ENCODE measurements at regions of chr4 and their contacts with region 1.

Region 1: DNA sequence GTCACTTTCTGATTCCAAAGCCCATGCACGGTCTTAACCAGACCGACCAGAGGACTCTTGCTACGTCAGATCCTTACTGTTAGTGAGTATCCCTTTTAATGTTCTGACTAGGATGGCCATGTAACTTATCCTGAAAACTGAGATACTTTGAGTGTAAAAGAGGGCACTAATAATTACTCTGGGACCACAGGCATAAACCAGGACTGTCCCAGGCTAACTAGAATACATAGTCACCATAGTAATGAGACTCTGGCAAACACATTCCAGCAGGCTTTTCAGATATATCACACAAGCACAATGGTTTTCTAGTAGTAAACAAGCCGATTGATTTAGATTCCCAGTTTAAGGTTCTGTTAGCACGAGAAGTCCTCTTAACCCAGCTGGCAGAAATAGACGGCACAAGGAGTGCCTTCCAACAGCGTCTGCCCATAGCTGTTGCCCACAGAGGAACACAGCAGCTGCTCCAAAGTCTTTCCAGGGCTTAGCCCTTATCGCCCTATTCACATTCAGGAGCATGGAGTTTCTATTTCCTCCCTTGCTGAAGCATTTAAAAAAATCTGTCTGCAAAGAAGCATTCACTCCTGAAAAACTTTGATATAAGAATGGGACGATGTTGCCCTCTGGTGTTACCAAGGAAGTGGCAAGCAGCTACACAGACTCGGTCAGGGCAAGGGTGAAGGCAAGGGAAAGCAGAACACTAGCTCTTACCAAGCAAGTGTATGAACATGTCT is 92.4 kb downstream of the CXCL13 start:
- DNase-seq: peak; percentile 34
- ATAC-seq: peak; percentile 61
- H3K4me3 ChIP-seq: no peak overlapping the region
- H3K27ac ChIP-seq: no peak overlapping the region
- H3K4me1 ChIP-seq: peaks cover 53% of the 10 kb centered on the region
- H3K27me3 ChIP-seq: no peaks in the 10 kb centered on the region
- CTCF ChIP-seq: peak; percentile 61
- EP300 ChIP-seq: no peak
- POLR2A ChIP-seq: no peak
- RAD21 ChIP-seq: no peak

Region 2: DNA sequence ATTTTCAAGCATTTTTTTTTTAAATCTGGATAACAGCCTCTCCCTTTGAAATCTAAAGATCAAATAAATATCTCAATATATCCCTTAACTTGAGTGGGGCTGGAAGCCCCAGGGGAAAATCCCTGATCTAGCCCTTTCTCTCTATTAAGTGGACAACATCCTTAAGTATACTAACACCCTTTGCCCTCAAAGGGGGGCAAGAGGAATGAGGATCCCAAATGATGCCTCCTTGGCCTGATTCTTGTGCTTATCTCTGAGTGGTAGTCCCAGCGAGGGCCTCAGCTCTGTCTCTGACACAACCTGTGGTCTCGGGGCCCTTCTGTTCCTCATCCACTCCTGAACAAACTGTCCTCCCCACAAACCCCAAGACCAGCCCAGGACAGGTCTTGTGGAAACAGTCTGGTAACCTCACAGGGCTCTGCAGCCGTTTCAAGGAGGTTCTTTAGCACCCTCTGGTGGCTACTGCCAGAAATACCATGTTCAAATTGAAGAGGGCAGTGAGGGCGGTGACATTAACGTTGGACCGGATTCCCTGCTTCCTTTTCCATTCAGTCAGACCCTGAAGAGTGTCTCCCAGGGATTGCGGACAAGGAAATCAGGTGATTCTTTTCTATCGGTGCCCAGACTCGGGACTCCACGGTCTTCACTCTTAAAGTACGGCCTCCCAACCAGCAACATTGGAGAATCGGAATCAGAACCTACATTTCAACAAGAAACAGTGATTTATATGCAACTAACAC is 79.5 kb before region 1 on chr4:
- CTCF ChIA-PET with region 1: no interaction called
- POLR2A ChIA-PET with region 1: no interaction called
- in situ Hi-C with region 1: loop called (anchors 5 kb)
- intact Hi-C with region 1: loop called (anchors 2 kb)
- DNase-seq: peak; percentile 40
- ATAC-seq: peak; percentile 97
- H3K4me3 ChIP-seq: no peak overlapping the region
- H3K27ac ChIP-seq: no peak overlapping the region
- H3K4me1 ChIP-seq: no peaks in the 10 kb centered on the region
- H3K27me3 ChIP-seq: peaks cover 0 to 3% of the 10 kb centered on the region in 2 experiments; a peak in 1 of 5 replicates
- CTCF ChIP-seq: peak; percentile 86
- EP300 ChIP-seq: no peak
- POLR2A ChIP-seq: no peak
- RAD21 ChIP-seq: 0 out of 2 replicates have a peak, but pooled peaks have one; percentile 27

Region 3: DNA sequence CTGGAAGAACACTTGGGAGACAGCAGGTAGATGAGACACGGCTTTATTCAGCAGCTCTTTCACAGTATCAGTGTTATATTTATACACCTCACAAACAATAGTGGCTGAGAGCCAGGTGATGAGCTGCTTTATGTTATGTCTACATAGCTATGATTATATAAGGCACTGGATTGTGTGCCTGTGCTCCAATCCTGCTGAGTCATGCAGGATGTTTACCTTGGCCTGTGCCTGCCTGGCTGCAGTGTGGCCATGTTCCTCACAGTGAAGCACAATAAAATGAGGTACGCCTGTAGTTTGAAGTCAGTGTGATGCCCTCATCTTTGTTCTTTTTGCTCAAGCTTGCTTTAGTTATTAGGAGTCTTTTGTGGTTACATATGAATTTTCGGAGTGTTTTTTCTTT is 61.1 kb before region 1 on chr4:
- CTCF ChIA-PET with region 1: no interaction called
- POLR2A ChIA-PET with region 1: no interaction called
- in situ Hi-C with region 1: no loop called
- intact Hi-C with region 1: loop called (anchors 5 kb)
- DNase-seq: peak; percentile 83
- ATAC-seq: peak; percentile 68
- H3K4me3 ChIP-seq: no peak overlapping the region
- H3K27ac ChIP-seq: no peak overlapping the region
- H3K4me1 ChIP-seq: peaks cover 35% of the 10 kb centered on the region
- H3K27me3 ChIP-seq: no peaks in the 10 kb centered on the region
- CTCF ChIP-seq: no peak
- EP300 ChIP-seq: peak in 1 of 2 experiments; percentile 65; a peak in 1 of 4 replicates
- POLR2A ChIP-seq: no peak
- RAD21 ChIP-seq: no peak

Region 4: DNA sequence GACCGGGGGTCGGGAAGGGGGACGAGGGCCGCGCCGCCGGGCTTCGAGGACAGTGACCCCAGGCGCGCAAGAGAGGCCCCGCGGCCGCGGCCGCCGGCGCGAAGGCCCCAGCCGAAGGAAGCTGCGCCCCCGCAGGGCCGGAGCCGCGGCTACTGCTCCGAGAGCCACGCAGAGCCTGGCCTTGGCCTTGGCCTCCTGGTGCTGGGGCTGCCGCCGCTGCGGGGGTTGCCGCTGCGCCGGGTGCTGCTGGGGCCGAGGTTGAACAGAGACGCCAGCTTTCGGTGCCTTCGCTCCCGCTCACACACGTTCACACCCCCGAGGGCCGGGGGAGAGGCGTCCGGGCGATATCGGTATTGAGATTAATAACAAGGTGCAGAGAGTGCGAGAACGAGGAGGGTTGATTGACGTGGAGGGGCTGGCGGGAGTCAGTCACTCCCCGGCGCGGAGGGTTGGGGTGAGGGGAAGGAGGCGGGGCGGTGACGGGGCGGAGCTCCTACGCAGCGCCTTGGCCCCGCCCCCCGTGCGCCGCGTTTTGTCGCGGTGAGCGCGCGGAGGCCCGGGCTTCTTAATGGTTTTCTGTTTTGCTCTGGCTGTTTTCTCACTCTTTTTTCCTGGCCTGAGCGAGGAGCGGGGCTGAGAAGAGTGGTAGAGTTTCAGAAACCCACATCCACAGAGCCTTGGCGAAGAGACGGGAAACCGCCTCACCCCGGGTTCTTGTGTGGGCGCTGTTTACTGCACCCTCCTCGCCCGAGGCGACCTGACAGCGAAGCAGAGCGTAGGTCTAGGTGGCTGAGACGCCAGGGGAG is 122.0 kb after region 1 on chr4:
- CTCF ChIA-PET with region 1: no interaction called
- POLR2A ChIA-PET with region 1: no interaction called
- in situ Hi-C with region 1: no loop called
- intact Hi-C with region 1: loop called (anchors 1 kb)
- DNase-seq: peak; percentile 52
- ATAC-seq: peak; percentile 69
- H3K4me3 ChIP-seq: peak overlapping the region; percentile 94 to 100 (median 99)
- H3K27ac ChIP-seq: peak overlapping the region; percentile 92
- H3K4me1 ChIP-seq: peaks cover 28% of the 10 kb centered on the region
- H3K27me3 ChIP-seq: no peaks in the 10 kb centered on the region; a peak in 1 of 5 replicates
- CTCF ChIP-seq: peak; percentile 22
- EP300 ChIP-seq: no peak
- POLR2A ChIP-seq: peak; percentile 70 to 83
- RAD21 ChIP-seq: peak; percentile 48; the same call in 1 of the 2 replicates

Measured in HepG2 (cell line).